Heart right ventricle (tissue), 16 donors: ENCODE measurements at regions of chr18 and their contacts with region 1.

Region 1: GRCh38 chr18:864872-865273 is 39.8 kb upstream of the ADCYAP1 start:
- DNase-seq: peak; percentile 53 to 65
- ATAC-seq: peak in 7 of 8 donors; percentile 67 to 91 (median 79)
- H3K4me3 ChIP-seq: no peak overlapping the region
- H3K27ac ChIP-seq: no peak overlapping the region
- H3K4me1 ChIP-seq: peaks cover 0 to 6% (median 0%) of the 10 kb centered on the region in 9 donors
- H3K27me3 ChIP-seq: peaks cover 0 to 47% (median 17%) of the 10 kb centered on the region in 7 donors
- CTCF ChIP-seq: peak; percentile 90 to 99 (median 96)

Region 2: GRCh38 chr18:434410-434809 is 430.5 kb before region 1 on chr18:
- intact Hi-C with region 1: no loop called
- DNase-seq: no peak
- ATAC-seq: no peak
- H3K4me3 ChIP-seq: no peak overlapping the region
- H3K27ac ChIP-seq: no peak overlapping the region
- H3K4me1 ChIP-seq: peaks cover 0 to 21% (median 5%) of the 10 kb centered on the region in 9 donors
- H3K27me3 ChIP-seq: no peaks in the 10 kb centered on the region
- CTCF ChIP-seq: no peak

Region 3: GRCh38 chr18:961644-962355 is 96.9 kb after region 1 on chr18:
- intact Hi-C with region 1: loop called in 6 of 10 experiments (anchors 5 to 10 kb)
- DNase-seq: peak; percentile 17 to 28
- ATAC-seq: peak in 1 of 8 donors; percentile 61
- H3K4me3 ChIP-seq: peak overlapping the region in 9 of 10 donors; percentile 7 to 52 (median 43)
- H3K27ac ChIP-seq: peak overlapping the region in 3 of 10 donors; percentile 4 to 67 (median 49)
- H3K4me1 ChIP-seq: peaks cover 0 to 7% (median 0%) of the 10 kb centered on the region in 9 donors
- H3K27me3 ChIP-seq: peaks cover 0 to 29% (median 7%) of the 10 kb centered on the region in 7 donors
- CTCF ChIP-seq: peak; percentile 82 to 92 (median 89)

Region 4: DNA sequence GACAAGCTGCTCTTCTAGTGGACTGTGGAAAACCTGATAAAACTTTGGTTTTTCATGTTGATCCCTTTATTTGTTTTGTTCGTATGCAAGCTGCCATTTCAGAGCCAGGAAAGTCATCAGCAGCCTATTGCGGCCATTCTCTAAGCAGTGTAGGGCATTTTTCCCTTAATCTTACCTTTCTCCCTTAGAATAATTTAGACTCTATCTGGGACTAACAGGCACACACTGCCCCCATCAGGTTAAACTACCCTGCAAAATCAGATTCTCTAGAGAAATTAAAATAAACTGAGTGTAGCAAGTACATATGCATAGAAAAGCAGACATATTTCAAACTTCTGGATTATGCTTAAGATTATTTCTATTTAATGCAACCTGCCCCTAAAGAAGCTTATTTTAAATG is 1359.0 kb after region 1 on chr18:
- intact Hi-C with region 1: loop called in 1 of 10 experiments (anchors 10 kb)
- DNase-seq: peak in 1 of 2 donors; percentile 26
- ATAC-seq: peak in 1 of 8 donors; percentile 51
- H3K4me3 ChIP-seq: peak overlapping the region in 6 of 10 donors; percentile 6 to 40 (median 29)
- H3K27ac ChIP-seq: no peak overlapping the region
- H3K4me1 ChIP-seq: no peaks in the 10 kb centered on the region
- H3K27me3 ChIP-seq: peaks cover 0 to 7% (median 0%) of the 10 kb centered on the region in 7 donors
- CTCF ChIP-seq: peak; percentile 23 to 70 (median 58)

Region 5: DNA sequence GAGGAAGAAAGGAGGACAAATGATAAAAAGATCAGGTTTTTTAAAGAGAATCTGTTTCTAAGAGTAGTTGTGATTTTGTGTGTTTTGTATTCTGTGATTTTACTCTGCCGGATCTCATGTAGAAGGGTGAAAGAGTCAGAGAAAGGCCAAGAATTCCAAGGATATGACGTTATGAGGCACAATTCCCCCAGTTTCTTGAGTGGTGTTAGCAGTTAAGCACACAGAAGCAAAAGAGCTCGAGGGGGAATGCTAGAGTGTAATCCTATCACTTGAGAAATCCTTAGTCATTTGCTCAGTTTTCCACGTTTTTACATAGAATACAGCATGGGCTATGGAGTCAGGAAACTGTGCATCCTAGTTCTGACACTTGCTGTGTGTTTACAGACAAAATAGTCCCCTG is 1671.6 kb after region 1 on chr18:
- intact Hi-C with region 1: loop called in 5 of 10 experiments (anchors 5 to 10 kb)
- DNase-seq: no peak
- ATAC-seq: peak in 5 of 8 donors; percentile 30 to 85 (median 56)
- H3K4me3 ChIP-seq: no peak overlapping the region
- H3K27ac ChIP-seq: peak overlapping the region in 2 of 10 donors; percentile 7 to 22
- H3K4me1 ChIP-seq: no peaks in the 10 kb centered on the region
- H3K27me3 ChIP-seq: no peaks in the 10 kb centered on the region
- CTCF ChIP-seq: no peak

Region 6: GRCh38 chr18:2547477-2548087 is 1682.7 kb after region 1 on chr18:
- intact Hi-C with region 1: loop called in 9 of 10 experiments (anchors 2 to 10 kb)
- DNase-seq: no peak
- ATAC-seq: peak in 2 of 8 donors; percentile 42 to 55
- H3K4me3 ChIP-seq: no peak overlapping the region
- H3K27ac ChIP-seq: no peak overlapping the region
- H3K4me1 ChIP-seq: no peaks in the 10 kb centered on the region
- H3K27me3 ChIP-seq: no peaks in the 10 kb centered on the region
- CTCF ChIP-seq: peak; percentile 36 to 72 (median 61)

Region 7: GRCh38 chr18:2554696-2555095 is 1689.8 kb after region 1 on chr18:
- intact Hi-C with region 1: loop called in 7 of 10 experiments (anchors 5 to 10 kb)
- DNase-seq: no peak
- ATAC-seq: no peak
- H3K4me3 ChIP-seq: no peak overlapping the region
- H3K27ac ChIP-seq: no peak overlapping the region
- H3K4me1 ChIP-seq: no peaks in the 10 kb centered on the region
- H3K27me3 ChIP-seq: no peaks in the 10 kb centered on the region
- CTCF ChIP-seq: no peak